A549 (cell line): ENCODE measurements at regions of chr11 and their contacts with region 1.

Region 1: DNA sequence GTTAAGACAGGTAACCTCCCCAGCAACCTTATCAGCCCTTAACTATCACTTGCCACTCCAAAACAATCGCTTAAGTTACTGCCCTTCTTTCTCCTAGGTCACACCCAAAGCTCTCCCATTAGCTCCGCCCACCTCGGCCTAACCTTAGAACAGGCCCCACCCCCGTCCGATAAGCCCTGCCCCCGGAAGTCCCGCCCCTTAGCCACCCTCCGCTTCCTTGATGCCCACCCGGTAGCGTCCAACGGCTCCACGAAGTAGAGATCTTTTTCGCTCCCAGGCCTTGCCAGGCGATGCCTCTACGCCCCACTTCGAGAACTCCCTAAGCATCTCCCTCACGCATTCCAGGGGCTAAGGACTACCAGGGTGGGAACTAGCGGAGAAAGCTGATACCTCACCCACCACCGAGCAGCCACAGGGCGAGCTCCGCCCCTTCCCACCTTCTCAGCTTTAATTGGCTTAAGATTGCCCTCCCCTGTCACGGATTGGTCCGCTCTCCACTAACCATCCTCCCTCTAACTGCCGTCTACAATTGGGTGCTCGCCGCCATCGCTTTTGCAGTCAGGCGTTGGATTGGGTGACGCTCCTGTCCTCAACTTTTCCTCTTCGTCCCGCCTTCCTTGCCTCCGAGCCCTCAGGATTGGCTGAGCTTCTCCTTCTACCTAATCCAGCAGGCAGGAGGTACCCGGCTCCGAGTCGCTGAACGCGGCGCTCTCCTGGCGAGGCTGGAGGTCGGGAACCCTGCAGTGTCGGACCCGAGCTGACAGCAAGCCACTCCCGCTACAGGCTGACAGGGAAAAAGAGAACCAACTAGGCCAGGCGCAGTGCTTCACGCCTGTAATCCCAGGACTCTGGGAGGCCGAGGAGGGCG is at the start of gene ZBTB3:
- DNase-seq: peak; percentile 99 to 100
- ATAC-seq: peak; percentile 98 to 99
- H3K4me3 ChIP-seq: peak within 1 kb of the TSS; percentile 55
- H3K27ac ChIP-seq: peak within 1 kb of the TSS; percentile 92 to 94
- H3K4me1 ChIP-seq: peaks cover 11% of the 10 kb centered on the region; the same call in 1 of the 3 replicates
- CTCF ChIP-seq: no peak
- EP300 ChIP-seq: no peak
- POLR2A ChIP-seq: peak; percentile 86
- RAD21 ChIP-seq: no peak
- polyA plus RNA-seq, gene ZBTB3: 3.0 and 3.1 TPM in 2 replicates

Region 2: GRCh38 chr11:62632492-62632891 is 121.5 kb before region 1 on chr11:
- CTCF ChIA-PET with region 1: no interaction called
- POLR2A ChIA-PET with region 1: no interaction called
- DNase-seq: no peak
- ATAC-seq: no peak
- H3K4me3 ChIP-seq: no peak overlapping the region
- H3K27ac ChIP-seq: no peak overlapping the region
- H3K4me1 ChIP-seq: no peaks in the 10 kb centered on the region
- CTCF ChIP-seq: no peak
- EP300 ChIP-seq: no peak
- POLR2A ChIP-seq: no peak
- RAD21 ChIP-seq: no peak

Region 3: GRCh38 chr11:62671575-62672389 is 82.2 kb before region 1 on chr11 and contains the starts of genes LBHD1 and UQCC3:
- CTCF ChIA-PET with region 1: no interaction called
- POLR2A ChIA-PET with region 1: interaction called, 15 read pairs
- DNase-seq: peak; percentile 86 to 92
- ATAC-seq: peak; percentile 81 to 86
- H3K4me3 ChIP-seq: peak within 1 kb of the TSS; percentile 90
- H3K27ac ChIP-seq: peak within 1 kb of the TSS; percentile 97 to 98
- H3K4me1 ChIP-seq: peaks cover 31% of the 10 kb centered on the region
- CTCF ChIP-seq: no peak
- EP300 ChIP-seq: no peak
- POLR2A ChIP-seq: peak; percentile 72
- RAD21 ChIP-seq: no peak
- polyA plus RNA-seq, gene LBHD1: 4.1 and 5.3 TPM in 2 replicates
- polyA plus RNA-seq, gene UQCC3: 13.9 and 20.2 TPM in 2 replicates

Region 4: GRCh38 chr11:62705880-62706849 is 47.8 kb before region 1 on chr11:
- CTCF ChIA-PET with region 1: interaction called, 5 read pairs
- POLR2A ChIA-PET with region 1: interaction called, 15 read pairs
- DNase-seq: peak; percentile 87 to 90
- ATAC-seq: peak; percentile 73 to 87
- H3K4me3 ChIP-seq: peak overlapping the region; percentile 69
- H3K27ac ChIP-seq: peak overlapping the region; percentile 80 to 92
- H3K4me1 ChIP-seq: peaks cover 26% of the 10 kb centered on the region
- CTCF ChIP-seq: no peak
- EP300 ChIP-seq: no peak
- POLR2A ChIP-seq: peak; percentile 66
- RAD21 ChIP-seq: no peak

Region 5: GRCh38 chr11:62726915-62727763 is 26.8 kb before region 1 on chr11 and contains the start of gene HNRNPUL2:
- CTCF ChIA-PET with region 1: interaction called, 7 read pairs
- POLR2A ChIA-PET with region 1: interaction called, 96 read pairs
- DNase-seq: peak; percentile 97 to 100
- ATAC-seq: peak; percentile 88 to 91
- H3K4me3 ChIP-seq: peak within 1 kb of the TSS; percentile 78
- H3K27ac ChIP-seq: peak within 1 kb of the TSS; percentile 97
- H3K4me1 ChIP-seq: peaks cover 21% of the 10 kb centered on the region
- CTCF ChIP-seq: no peak
- EP300 ChIP-seq: no peak
- POLR2A ChIP-seq: peak; percentile 77
- RAD21 ChIP-seq: no peak
- polyA plus RNA-seq, gene HNRNPUL2: 31.4 and 31.6 TPM in 2 replicates

Region 6: DNA sequence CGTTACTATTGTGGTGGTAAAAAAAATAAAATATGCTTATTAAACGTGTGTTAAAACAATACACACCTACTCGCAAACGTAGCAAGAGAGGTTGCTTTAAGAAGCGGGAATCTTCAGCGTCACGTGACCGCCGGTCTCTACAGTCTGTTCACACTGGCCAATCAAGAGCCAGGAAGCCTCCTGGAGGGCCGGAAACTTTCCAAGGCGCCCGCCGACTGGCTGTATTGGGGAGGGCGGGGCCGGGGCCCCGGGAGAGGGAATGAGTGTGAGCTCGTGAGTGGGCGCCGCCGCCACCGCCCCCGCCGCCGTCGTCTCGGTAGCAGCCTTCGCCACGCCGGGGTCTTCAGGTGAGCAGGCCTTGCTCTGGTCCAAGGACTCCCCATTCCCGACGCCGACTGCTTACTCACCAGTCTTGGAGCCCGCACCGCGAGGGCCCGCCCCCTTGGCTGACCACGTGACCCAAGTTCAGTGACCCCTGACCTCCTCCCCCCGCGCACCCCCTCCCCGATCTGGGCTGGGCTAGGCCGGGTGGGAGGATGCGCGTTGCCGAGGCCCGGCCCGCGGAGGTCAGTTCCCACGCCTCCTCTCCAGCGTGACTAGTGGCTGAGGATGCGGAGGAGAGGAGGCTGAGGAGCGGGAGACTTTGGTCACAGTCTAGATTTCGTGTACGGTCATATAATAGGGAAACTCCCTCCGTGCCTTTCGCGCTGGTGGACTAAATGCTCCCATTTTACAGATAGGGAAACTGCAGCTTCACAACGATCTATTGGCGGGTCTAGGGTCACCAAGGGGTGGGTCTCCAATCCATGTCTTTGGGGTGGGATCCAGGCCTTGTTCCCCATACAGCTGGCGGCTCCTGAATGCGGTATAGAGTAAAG is 17.4 kb after region 1 on chr11 and contains the start of gene TAF6L:
- CTCF ChIA-PET with region 1: interaction called, 9 read pairs
- POLR2A ChIA-PET with region 1: interaction called, 63 read pairs
- DNase-seq: peak; percentile 97 to 98
- ATAC-seq: peak; percentile 96 to 97
- H3K4me3 ChIP-seq: peak within 1 kb of the TSS; percentile 78
- H3K27ac ChIP-seq: peak within 1 kb of the TSS; percentile 93 to 94
- H3K4me1 ChIP-seq: peaks cover 15% of the 10 kb centered on the region
- CTCF ChIP-seq: no peak
- EP300 ChIP-seq: no peak
- POLR2A ChIP-seq: peak; percentile 55
- RAD21 ChIP-seq: no peak
- polyA plus RNA-seq, gene TAF6L: 14.0 and 17.5 TPM in 2 replicates

Region 7: DNA sequence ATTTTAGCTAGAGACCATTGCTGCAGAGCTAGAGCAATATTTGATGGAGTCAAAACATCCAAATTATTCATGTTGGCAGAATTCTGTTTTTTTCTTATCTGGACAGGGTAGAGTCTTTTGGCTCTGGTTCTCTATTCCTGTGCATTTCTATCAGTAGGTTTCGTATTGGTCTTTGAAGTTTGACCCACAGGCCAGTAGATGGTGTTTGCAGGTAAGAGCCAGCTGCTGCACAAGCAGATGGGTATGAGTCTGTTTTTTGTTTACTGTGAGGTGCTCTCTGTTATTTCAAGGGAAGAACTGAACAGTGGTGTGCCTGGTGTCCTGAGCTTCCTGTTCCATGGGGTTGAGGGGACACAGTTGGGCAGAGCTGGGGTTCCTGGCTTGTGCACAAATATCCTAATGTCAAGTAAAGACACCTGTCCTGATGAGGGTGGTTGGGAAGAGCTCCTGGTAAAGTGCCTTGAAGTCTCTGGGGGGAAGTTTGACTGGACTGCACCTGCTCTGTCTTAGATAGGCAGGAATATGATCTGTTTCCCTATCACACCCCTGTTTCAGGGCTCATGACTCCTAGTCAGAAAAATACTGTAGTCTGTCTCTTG is 523.5 kb after region 1 on chr11:
- CTCF ChIA-PET with region 1: no interaction called
- POLR2A ChIA-PET with region 1: no interaction called
- DNase-seq: peak in 1 of 2 experiments; percentile 30
- ATAC-seq: peak; percentile 64 to 67; a peak in 5 of 6 replicates
- H3K4me3 ChIP-seq: no peak overlapping the region
- H3K27ac ChIP-seq: no peak overlapping the region
- H3K4me1 ChIP-seq: no peaks in the 10 kb centered on the region
- CTCF ChIP-seq: 0 out of 3 replicates have a peak, but pooled peaks have one; percentile 15
- EP300 ChIP-seq: no peak
- POLR2A ChIP-seq: no peak
- RAD21 ChIP-seq: peak in 1 of 2 experiments; percentile 39; a peak in 2 of 5 replicates